Activated CD8-positive, alpha-beta T cell treated with anti-CD3 and anti-CD28 coated beads for 36 hours (primary cell): ENCODE measurements at regions of chr22 and their contacts with region 1.

Region 1: DNA sequence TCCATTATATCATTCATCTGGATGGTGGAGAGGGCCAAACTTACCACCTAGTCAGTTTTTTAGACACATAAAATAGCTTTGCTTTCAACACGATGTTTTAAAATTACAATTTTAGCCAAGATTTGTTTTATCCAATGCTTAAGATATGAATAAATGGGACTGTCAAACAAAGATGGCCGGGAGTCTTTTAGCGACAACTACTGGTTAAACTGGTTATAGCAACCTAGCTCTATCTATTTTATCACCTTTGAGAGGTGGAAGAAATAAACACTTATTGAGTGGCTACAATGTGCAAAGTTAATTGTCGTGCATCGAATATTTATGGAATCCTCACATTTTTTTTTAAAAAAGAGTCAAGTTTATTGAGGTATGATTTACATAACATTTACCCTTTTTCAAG is 279.8 kb downstream of the MIAT start:
- DNase-seq: no peak
- ATAC-seq: no peak
- H3K4me3 Mint-ChIP-seq: no peak overlapping the region
- H3K27ac Mint-ChIP-seq: no peak overlapping the region
- H3K4me1 Mint-ChIP-seq: no peaks in the 10 kb centered on the region
- H3K27me3 Mint-ChIP-seq: no peaks in the 10 kb centered on the region
- CTCF ChIP-seq: no peak

Region 2: GRCh38 chr22:26985931-26986782 is 48.9 kb after region 1 on chr22:
- CTCF ChIA-PET with region 1: no interaction called
- POLR2A ChIA-PET with region 1: no interaction called
- intact Hi-C with region 1: loop called (anchors 10 kb)
- DNase-seq: no peak
- ATAC-seq: no peak
- H3K4me3 Mint-ChIP-seq: no peak overlapping the region
- H3K27ac Mint-ChIP-seq: no peak overlapping the region
- H3K4me1 Mint-ChIP-seq: no peaks in the 10 kb centered on the region
- H3K27me3 Mint-ChIP-seq: no peaks in the 10 kb centered on the region
- CTCF ChIP-seq: no peak